H1 (cell line): ENCODE measurements at regions of chr15 and their contacts with region 1.

Region 1: DNA sequence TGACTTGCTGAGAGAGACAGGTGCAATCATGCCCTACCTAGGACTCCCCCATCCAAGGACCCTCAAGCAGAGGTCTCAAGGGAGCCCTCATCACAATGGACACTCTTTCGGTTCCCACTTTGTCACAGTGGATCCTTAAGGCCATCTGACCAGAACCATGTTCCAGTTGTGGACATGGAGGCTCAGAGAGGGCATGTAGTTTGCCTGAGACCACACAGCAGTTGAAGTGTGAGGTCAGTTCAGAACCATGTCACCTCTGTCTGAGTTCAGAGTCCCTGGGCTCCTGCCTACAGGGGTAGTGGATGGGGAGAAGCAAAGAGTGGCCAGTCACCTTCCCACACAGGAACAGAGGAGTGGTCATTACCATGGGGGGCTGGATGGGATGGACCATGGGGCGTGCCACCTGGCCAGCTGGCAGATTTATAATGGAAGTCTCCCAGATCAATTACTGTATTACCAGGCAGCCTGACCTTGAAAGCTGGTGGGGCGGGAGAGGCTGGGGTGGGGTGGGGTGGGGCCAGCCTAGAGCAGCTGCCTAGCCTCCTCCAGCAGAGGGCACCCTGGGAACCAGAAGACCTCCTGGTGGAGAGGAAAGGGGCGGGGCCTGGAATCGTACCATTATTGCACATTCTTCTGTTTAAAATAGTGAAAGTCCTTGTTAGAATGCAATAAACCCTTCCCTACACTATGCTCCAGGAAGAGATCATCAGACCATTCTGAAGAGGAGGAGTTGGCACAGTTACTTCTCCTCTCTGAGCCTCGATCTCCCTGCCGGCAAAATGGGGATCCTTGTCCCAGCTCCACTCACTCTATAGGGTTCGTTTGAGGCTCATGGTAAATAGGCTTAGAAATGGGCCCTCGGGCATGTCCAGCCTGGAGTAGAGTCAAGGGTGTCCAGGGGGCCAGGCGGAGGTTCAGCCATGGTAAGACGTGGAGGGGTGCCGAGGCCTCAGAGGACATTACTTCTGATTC is 26.9 kb upstream of the LINGO1 start:
- DNase-seq: peak in 1 of 2 experiments; percentile 76
- H3K4me3 ChIP-seq: no peak overlapping the region
- H3K27ac ChIP-seq: no peak overlapping the region
- H3K4me1 ChIP-seq: peaks cover 0 to 16% (median 10%) of the 10 kb centered on the region in 4 experiments; a peak in 5 of 7 replicates
- H3K27me3 ChIP-seq: no peaks in the 10 kb centered on the region
- CTCF ChIP-seq: peak; percentile 53 to 66 (median 55); a peak in 3 of 4 replicates
- EP300 ChIP-seq: no peak
- POLR2A ChIP-seq: no peak
- RAD21 ChIP-seq: peak; percentile 55 to 64

Region 2: DNA sequence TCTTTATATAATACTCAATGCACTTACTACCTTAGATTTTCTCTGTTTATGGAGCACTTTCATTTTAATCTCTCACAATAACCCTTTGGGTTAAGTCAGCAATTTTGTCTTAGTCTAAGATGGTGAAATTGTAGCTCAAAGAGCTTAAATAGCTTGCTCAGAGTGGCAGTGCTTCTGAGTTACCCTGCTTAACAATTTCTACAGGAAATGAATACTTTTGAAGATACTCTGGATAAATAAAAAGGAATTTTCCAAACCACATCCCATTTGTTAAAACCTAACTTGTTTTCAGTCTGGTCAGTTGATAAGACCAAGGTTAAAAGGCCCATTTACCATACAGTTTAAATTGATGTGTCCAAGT is 201.8 kb before region 1 on chr15:
- CTCF ChIA-PET with region 1: no interaction called
- POLR2A ChIA-PET with region 1: no interaction called
- DNase-seq: no peak
- H3K4me3 ChIP-seq: no peak overlapping the region
- H3K27ac ChIP-seq: no peak overlapping the region
- H3K4me1 ChIP-seq: peaks cover 0 to 4% (median 0%) of the 10 kb centered on the region in 4 experiments; a peak in 1 of 7 replicates
- H3K27me3 ChIP-seq: no peaks in the 10 kb centered on the region
- CTCF ChIP-seq: no peak
- EP300 ChIP-seq: no peak
- POLR2A ChIP-seq: no peak
- RAD21 ChIP-seq: no peak

Region 3: DNA sequence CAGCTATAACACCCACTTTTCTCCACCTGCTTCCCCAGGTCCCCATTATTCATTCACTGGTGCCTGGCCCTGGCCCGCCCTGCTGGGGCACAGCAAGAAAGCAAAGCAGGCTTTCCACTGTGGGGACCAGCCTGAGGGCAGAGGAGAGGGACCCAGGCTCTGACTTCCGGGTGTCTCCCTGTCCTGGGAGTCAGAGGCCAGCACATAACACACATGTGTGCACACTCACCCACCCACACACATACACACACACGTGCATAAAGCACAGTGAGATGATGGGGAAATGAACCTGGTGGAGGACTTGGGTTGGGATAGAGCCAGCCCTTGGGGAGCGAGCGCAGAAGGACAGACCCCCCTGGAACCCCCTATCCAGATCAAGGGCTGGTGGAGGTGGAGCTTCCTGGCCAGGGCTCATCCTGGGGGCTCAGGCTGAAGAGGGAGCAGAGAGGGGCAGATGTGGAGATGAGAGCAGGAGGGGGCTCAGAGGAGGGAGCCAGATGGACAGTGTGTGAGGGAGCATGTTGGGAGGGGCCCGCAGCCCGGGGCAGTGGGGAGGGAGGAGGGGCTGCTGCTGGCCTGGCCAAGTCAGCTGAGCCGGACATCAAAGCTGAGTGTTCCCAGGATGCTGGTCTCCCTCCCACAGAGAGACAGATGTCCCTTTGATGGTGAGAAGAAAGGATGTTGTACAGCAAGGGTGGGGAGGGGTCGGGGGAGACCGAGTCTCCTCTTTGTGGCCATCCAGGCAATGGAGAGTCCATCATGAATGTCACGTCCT is 105.1 kb before region 1 on chr15:
- CTCF ChIA-PET with region 1: no interaction called
- POLR2A ChIA-PET with region 1: no interaction called
- DNase-seq: no peak
- H3K4me3 ChIP-seq: no peak overlapping the region
- H3K27ac ChIP-seq: no peak overlapping the region
- H3K4me1 ChIP-seq: peaks cover 0 to 9% (median 5%) of the 10 kb centered on the region in 4 experiments; a peak in 6 of 7 replicates
- H3K27me3 ChIP-seq: no peaks in the 10 kb centered on the region
- CTCF ChIP-seq: no peak
- EP300 ChIP-seq: no peak
- POLR2A ChIP-seq: no peak
- RAD21 ChIP-seq: no peak

Region 4: DNA sequence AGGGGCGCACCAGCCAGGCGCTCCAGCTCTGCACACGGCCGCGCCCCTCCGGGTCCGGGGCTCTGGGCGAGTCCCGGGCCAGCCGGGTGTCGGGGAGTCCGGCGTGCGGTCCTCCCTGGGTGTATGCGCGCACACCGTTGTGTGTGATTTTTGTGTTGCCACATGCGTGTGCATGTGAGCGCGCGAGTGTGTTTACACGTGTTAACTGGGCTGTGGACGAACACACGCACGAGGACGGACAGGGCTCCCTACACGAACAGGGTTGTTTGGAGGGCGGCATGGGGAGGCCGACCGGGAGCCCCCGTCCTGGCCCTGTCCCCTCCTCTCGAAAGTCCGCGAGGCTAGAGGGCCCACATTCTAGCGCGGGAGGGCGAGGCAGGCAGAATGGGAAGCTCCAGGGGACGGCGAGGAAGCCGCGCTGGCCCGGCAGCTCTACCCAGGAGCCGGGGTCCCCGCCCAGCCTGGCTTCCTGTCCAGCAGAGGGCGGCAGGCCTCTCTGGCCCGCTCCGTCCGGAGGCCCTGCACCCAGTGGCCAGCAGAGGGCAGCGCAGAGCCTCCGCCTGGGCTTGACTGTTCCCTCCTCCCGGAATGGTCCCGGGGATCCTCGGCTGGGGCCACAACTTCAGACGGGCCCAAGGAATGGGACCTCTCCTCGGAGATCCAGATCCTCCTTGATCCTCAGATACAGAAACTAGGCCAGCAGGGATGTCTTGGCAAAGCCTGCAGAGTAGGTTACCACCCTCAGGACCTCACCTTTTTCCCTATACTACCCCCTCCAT is 26.3 kb before region 1 on chr15:
- CTCF ChIA-PET with region 1: interaction called, 361 read pairs
- POLR2A ChIA-PET with region 1: interaction called, 5 read pairs
- DNase-seq: peak; percentile 87 to 99
- H3K4me3 ChIP-seq: peak overlapping the region; percentile 58 to 68 (median 67)
- H3K27ac ChIP-seq: peak overlapping the region; percentile 84
- H3K4me1 ChIP-seq: peaks cover 22 to 48% (median 33%) of the 10 kb centered on the region in 4 experiments
- H3K27me3 ChIP-seq: no peaks in the 10 kb centered on the region; a peak in 1 of 7 replicates
- CTCF ChIP-seq: peak in 2 of 3 experiments; percentile 100; a peak in 3 of 4 replicates
- EP300 ChIP-seq: no peak
- POLR2A ChIP-seq: peak in 1 of 2 experiments; percentile 68; a peak in 2 of 3 replicates
- RAD21 ChIP-seq: peak; percentile 83 to 89

Region 5: GRCh38 chr15:77702211-77702957 is 42.7 kb after region 1 on chr15:
- CTCF ChIA-PET with region 1: interaction called, 12 read pairs
- POLR2A ChIA-PET with region 1: interaction called, 3 read pairs
- DNase-seq: peak; percentile 25 to 88
- H3K4me3 ChIP-seq: no peak overlapping the region
- H3K27ac ChIP-seq: no peak overlapping the region
- H3K4me1 ChIP-seq: peaks cover 0 to 8% (median 0%) of the 10 kb centered on the region in 4 experiments; a peak in 2 of 7 replicates
- H3K27me3 ChIP-seq: no peaks in the 10 kb centered on the region
- CTCF ChIP-seq: no peak
- EP300 ChIP-seq: no peak
- POLR2A ChIP-seq: no peak
- RAD21 ChIP-seq: peak; percentile 21 to 45; a peak in 3 of 4 replicates

Region 6: GRCh38 chr15:77732514-77733335 is 73.1 kb after region 1 on chr15:
- CTCF ChIA-PET with region 1: interaction called, 39 read pairs
- POLR2A ChIA-PET with region 1: no interaction called
- DNase-seq: no peak
- H3K4me3 ChIP-seq: no peak overlapping the region
- H3K27ac ChIP-seq: no peak overlapping the region
- H3K4me1 ChIP-seq: peaks cover 0 to 12% (median 2%) of the 10 kb centered on the region in 4 experiments; a peak in 4 of 7 replicates
- H3K27me3 ChIP-seq: no peaks in the 10 kb centered on the region
- CTCF ChIP-seq: no peak
- EP300 ChIP-seq: no peak
- POLR2A ChIP-seq: no peak
- RAD21 ChIP-seq: no peak

Region 7: DNA sequence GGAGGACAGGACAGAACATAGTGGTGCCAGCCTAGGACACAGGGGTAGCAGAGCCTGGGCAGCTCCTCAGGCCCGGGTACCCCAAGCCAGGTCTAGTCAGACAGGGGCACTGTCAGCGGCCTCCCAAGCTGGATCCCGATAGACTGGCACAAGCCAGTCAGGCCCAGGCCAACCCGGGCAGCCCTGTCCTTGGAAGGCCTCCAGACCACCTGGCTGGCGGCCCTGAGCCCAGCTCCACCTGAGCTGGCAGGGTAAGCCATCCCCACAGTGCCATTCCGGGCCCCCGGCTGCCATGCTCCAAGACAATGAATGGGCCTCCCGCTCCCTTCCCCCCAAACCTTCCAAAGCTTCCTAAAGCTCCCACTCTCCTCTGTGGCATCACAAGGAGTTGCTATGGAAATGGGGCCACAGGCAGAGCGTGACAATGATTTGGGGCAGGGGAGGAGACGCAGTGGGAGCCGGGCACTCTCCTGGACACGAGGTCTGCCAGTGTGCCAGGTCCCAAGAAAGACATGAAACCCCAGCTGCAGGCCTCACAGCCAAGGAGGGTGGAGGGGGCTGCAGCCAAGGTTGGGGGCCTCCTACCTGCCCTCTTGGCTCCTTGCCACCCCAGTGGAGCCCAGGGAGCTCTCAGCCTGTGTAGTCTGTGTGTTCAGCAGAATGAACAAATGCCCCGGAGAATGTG is 138.7 kb after region 1 on chr15:
- CTCF ChIA-PET with region 1: interaction called, 11 read pairs
- POLR2A ChIA-PET with region 1: no interaction called
- DNase-seq: no peak
- H3K4me3 ChIP-seq: no peak overlapping the region
- H3K27ac ChIP-seq: no peak overlapping the region
- H3K4me1 ChIP-seq: 0 out of 7 replicates have a peak, but pooled peaks cover 0 to 3% (median 0%) of the 10 kb centered on the region in 4 experiments
- H3K27me3 ChIP-seq: no peaks in the 10 kb centered on the region
- CTCF ChIP-seq: no peak
- EP300 ChIP-seq: no peak
- POLR2A ChIP-seq: no peak
- RAD21 ChIP-seq: no peak

Region 8: DNA sequence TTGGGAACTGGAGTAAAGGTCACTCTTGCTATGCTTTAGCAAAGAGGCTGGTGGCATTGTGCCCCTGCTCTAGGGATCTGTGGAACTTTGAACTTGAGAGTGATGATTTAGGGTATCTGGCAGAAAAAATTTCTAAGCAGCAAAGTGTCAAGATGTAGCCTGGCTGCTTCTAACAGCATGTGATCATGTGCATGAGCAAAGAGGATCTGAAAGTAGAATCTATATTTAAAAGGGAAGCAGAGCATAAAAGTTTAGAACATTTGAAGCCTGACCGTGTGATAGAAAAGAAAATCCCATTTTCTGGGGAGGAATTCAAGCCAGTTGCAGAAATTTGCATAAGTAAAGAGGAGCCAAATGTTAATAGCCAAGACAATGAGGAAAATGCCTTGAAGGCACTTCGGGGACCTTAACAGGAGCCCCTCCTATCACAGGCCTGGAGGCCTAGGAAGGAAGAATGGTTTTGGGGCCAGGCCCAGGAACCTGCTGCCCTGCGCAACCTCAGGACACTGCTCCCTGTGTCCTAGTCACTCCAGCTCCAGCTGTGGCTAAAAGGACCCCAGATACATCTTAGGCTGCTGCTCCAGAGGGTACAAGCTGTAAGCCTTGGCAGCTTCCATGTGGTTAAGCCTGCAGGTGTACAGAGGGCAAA is 185.3 kb after region 1 on chr15:
- CTCF ChIA-PET with region 1: no interaction called
- POLR2A ChIA-PET with region 1: no interaction called
- DNase-seq: no peak
- H3K4me3 ChIP-seq: no peak overlapping the region
- H3K27ac ChIP-seq: no peak overlapping the region
- H3K4me1 ChIP-seq: peaks cover 0 to 7% (median 3%) of the 10 kb centered on the region in 4 experiments; a peak in 1 of 7 replicates
- H3K27me3 ChIP-seq: no peaks in the 10 kb centered on the region
- CTCF ChIP-seq: no peak
- EP300 ChIP-seq: no peak
- POLR2A ChIP-seq: no peak
- RAD21 ChIP-seq: no peak